ENCODE measurements at regions of chr2 and their contacts with region 1.

Region 1: DNA sequence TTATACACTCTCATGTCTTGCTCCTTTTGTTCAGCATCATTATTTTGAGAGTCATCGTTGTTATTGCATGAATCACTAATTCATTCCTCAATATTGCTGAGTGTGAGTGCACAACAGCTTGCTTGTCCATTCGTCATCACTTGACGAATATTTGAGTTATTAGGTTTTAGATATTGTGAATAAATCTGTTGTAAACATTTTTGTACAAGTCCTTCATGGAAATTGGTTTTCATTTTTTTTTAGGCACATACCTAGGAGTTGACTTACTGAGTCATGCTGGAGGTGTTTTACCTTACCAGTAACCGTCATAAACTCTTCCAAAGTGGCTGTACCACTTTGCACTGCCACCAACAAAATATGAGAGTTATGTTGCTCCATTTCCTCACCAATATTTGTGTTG is 84.2 kb upstream of the NCK2 start:
- DNase-seq: no peak
- ATAC-seq: no peak
- H3K4me3 ChIP-seq: no peak overlapping the region
- H3K4me3 Mint-ChIP-seq: no peak overlapping the region
- H3K27ac ChIP-seq: no peak overlapping the region
- H3K27ac Mint-ChIP-seq: no peak overlapping the region
- H3K4me1 ChIP-seq: no peaks in the 10 kb centered on the region
- H3K4me1 Mint-ChIP-seq: no peaks in the 10 kb centered on the region
- H3K27me3 ChIP-seq: no peaks in the 10 kb centered on the region
- H3K27me3 Mint-ChIP-seq: no peaks in the 10 kb centered on the region
- CTCF ChIP-seq: no peak

Region 2: DNA sequence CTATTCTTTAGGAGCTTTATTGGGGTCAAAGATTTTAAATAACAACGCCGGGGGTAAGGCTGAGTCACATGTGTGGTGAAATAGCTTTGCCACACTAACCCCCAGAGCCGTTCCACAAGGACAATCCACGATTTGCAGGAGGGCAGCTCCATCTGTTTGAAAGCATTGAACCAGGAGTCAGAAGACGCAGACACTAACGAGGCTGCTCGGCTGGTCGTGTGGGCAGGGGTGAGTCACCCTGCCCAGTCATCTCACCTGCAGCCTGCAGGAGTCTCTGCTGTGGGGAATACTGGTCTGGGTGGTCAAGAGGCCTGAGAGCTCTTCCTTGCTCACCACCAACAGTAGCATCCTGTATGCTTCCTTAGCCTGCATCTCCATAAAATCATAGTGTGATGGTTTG is 65.0 kb before region 1 on chr2:
- CTCF ChIA-PET with region 1: no interaction called
- POLR2A ChIA-PET with region 1: no interaction called
- intact Hi-C with region 1: no loop called
- DNase-seq: no peak
- ATAC-seq: no peak
- H3K4me3 ChIP-seq: no peak overlapping the region
- H3K4me3 Mint-ChIP-seq: no peak overlapping the region
- H3K27ac ChIP-seq: no peak overlapping the region
- H3K27ac Mint-ChIP-seq: no peak overlapping the region
- H3K4me1 ChIP-seq: peaks cover 9% of the 10 kb centered on the region
- H3K4me1 Mint-ChIP-seq: peaks cover 28% of the 10 kb centered on the region
- H3K27me3 ChIP-seq: no peaks in the 10 kb centered on the region
- H3K27me3 Mint-ChIP-seq: no peaks in the 10 kb centered on the region
- CTCF ChIP-seq: no peak

Region 3: GRCh38 chr2:105734762-105735538 is 74.5 kb after region 1 on chr2:
- CTCF ChIA-PET with region 1: no interaction called
- POLR2A ChIA-PET with region 1: no interaction called
- intact Hi-C with region 1: loop called in 1 of 2 experiments (anchors 5 kb)
- DNase-seq: no peak
- ATAC-seq: no peak
- H3K4me3 ChIP-seq: no peak overlapping the region
- H3K4me3 Mint-ChIP-seq: no peak overlapping the region
- H3K27ac ChIP-seq: no peak overlapping the region
- H3K27ac Mint-ChIP-seq: no peak overlapping the region
- H3K4me1 ChIP-seq: peaks cover 47% of the 10 kb centered on the region
- H3K4me1 Mint-ChIP-seq: peaks cover 54% of the 10 kb centered on the region
- H3K27me3 ChIP-seq: no peaks in the 10 kb centered on the region
- H3K27me3 Mint-ChIP-seq: no peaks in the 10 kb centered on the region
- CTCF ChIP-seq: no peak